ENCODE measurements at regions of chr2 and their contacts with region 1.

Region 1: GRCh38 chr2:44479122-44479887 is 117.6 kb downstream of the CAMKMT start:
- DNase-seq: peak; percentile 69
- H3K4me3 ChIP-seq: no peak overlapping the region
- H3K27ac ChIP-seq: no peak overlapping the region
- H3K4me1 ChIP-seq: no peaks in the 10 kb centered on the region
- H3K27me3 ChIP-seq: no peaks in the 10 kb centered on the region
- CTCF ChIP-seq: peak; percentile 100

Region 2: DNA sequence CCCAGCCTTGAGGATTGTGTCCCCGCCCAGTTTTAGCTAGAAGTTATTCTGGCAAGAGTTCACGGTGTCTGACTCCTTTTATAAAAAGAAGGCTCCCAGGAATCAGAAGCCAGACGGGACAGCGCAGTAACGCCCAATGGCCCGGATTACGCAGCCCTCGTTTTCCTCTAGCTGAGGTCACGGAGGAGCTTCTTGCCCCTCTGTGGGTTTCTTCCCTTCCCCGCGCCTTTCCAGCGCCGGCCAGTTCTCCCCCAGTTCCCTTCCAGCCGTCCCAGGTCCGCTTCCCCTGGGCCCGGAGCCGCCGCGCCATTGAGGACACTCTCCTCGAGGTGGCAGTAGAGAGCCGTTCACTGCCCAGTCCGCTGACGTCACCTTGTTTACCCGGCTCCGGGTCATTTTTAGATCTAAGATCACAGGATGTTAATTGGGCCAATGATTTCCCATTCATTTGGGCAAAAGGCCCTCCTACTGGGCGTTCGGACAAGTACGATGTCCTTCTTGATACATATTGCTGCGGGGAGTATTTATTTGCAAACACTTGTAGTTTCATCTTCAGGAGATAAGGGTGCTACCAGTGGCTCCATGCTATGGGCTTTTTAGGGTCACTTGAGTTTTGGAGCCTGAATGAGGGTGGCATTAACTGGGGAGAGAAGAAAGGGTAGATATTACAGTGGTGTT is 392.1 kb before region 1 on chr2:
- CTCF ChIA-PET with region 1: no interaction called
- dilution Hi-C with region 1: no loop called
- in situ Hi-C with region 1: no loop called
- intact Hi-C with region 1: loop called (anchors 5 kb)
- DNase-seq: peak; percentile 56
- H3K4me3 ChIP-seq: peak overlapping the region in 1 of 3 experiments; percentile 16
- H3K27ac ChIP-seq: no peak overlapping the region
- H3K4me1 ChIP-seq: no peaks in the 10 kb centered on the region
- H3K27me3 ChIP-seq: no peaks in the 10 kb centered on the region
- CTCF ChIP-seq: peak; percentile 86 to 94

Region 3: DNA sequence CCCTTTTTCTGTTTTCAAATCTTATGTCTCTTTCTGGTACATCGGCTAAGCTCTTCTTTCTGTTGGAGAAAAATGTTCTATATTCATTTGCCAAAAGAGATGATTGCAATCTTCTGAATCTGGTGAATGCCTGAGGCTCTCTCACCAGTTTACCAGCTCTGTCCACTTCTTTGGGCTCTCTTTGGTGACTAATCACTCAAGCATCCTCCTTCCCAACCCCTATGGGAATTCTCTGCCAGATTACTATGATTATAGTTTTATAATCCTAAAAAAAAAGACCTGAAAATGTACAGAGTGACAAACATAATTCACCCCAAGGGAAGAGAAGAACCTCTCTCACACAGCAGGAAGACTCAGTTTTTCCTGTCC is 69.8 kb after region 1 on chr2:
- CTCF ChIA-PET with region 1: interaction called, 5 read pairs
- dilution Hi-C with region 1: no loop called
- in situ Hi-C with region 1: no loop called
- intact Hi-C with region 1: loop called (anchors 10 kb)
- DNase-seq: peak; percentile 76
- H3K4me3 ChIP-seq: peak overlapping the region in 1 of 3 experiments; percentile 0
- H3K27ac ChIP-seq: peak overlapping the region; percentile 55
- H3K4me1 ChIP-seq: peaks cover 49% of the 10 kb centered on the region
- H3K27me3 ChIP-seq: no peaks in the 10 kb centered on the region
- CTCF ChIP-seq: no peak

Region 4: DNA sequence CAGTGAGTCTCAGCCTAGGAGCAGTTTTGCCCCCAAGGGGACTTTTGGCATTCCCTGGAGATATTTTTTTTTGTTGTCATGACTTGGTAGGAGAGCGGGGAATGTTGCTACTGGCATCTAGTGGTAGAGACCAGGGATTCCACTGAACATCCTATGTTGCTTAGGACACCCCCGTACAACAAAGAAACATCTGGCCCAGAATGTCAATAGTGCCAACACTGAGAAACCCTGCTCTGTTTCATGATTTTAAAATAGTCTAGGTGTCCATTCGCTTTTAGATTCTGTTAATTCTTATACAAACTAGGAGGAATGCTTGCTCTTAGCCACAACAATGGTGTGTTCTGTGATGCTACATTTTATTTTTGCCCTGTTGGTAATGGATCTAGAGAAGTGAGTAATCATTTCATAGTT is 236.4 kb after region 1 on chr2:
- CTCF ChIA-PET with region 1: interaction called, 11 read pairs
- dilution Hi-C with region 1: no loop called
- in situ Hi-C with region 1: no loop called
- intact Hi-C with region 1: loop called (anchors 2 kb)
- DNase-seq: peak; percentile 56
- H3K4me3 ChIP-seq: no peak overlapping the region
- H3K27ac ChIP-seq: no peak overlapping the region
- H3K4me1 ChIP-seq: no peaks in the 10 kb centered on the region
- H3K27me3 ChIP-seq: no peaks in the 10 kb centered on the region
- CTCF ChIP-seq: peak; percentile 50 to 82

Region 5: GRCh38 chr2:44974064-44974715 is 494.9 kb after region 1 on chr2:
- CTCF ChIA-PET with region 1: interaction called, 15 read pairs
- dilution Hi-C with region 1: no loop called
- in situ Hi-C with region 1: loop called (anchors 25 kb)
- intact Hi-C with region 1: loop called (anchors 5 kb)
- DNase-seq: peak; percentile 53
- H3K4me3 ChIP-seq: no peak overlapping the region
- H3K27ac ChIP-seq: no peak overlapping the region
- H3K4me1 ChIP-seq: peaks cover 5% of the 10 kb centered on the region
- H3K27me3 ChIP-seq: no peaks in the 10 kb centered on the region
- CTCF ChIP-seq: peak; percentile 54 to 78